ENCODE measurements at regions of chr16 and their contacts with region 1.

Region 1: DNA sequence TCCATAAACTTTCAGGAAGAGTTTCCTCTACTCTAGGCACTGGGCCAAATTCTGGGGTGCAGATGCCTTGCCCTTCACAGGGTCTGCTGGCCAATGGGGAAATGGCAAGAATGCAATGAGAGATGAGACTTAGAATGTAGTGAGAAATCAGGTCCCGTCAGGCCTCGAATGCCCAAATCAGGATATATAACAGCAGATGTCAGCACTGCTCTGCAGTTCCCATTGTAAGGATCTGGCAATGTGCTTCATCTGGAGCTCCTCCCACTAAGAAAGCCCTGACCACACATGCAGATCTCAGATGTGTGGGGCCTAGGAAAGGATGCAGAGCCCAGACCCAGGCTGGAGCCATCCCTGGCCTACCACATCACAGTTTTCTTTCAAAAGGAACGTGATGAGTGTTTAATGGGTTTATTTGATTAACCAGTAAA is 13.9 kb upstream of the LPCAT2 start:
- DNase-seq: peak; percentile 85
- H3K4me3 ChIP-seq: no peak overlapping the region
- H3K27ac ChIP-seq: peak overlapping the region; percentile 2
- H3K4me1 ChIP-seq: peaks cover 52% of the 10 kb centered on the region
- H3K27me3 ChIP-seq: no peaks in the 10 kb centered on the region
- CTCF ChIP-seq: peak; percentile 20 to 33
- POLR2A ChIP-seq: no peak

Region 2: GRCh38 chr16:55136356-55137150 is 358.5 kb before region 1 on chr16:
- CTCF ChIA-PET with region 1: no interaction called
- POLR2A ChIA-PET with region 1: no interaction called
- dilution Hi-C with region 1: no loop called
- intact Hi-C with region 1: no loop called
- DNase-seq: no peak
- H3K4me3 ChIP-seq: no peak overlapping the region
- H3K27ac ChIP-seq: no peak overlapping the region
- H3K4me1 ChIP-seq: no peaks in the 10 kb centered on the region
- H3K27me3 ChIP-seq: no peaks in the 10 kb centered on the region
- CTCF ChIP-seq: no peak
- POLR2A ChIP-seq: no peak

Region 3: GRCh38 chr16:55393991-55394390 is 101.0 kb before region 1 on chr16:
- CTCF ChIA-PET with region 1: no interaction called
- POLR2A ChIA-PET with region 1: no interaction called
- dilution Hi-C with region 1: no loop called
- intact Hi-C with region 1: no loop called
- DNase-seq: no peak
- H3K4me3 ChIP-seq: no peak overlapping the region
- H3K27ac ChIP-seq: no peak overlapping the region
- H3K4me1 ChIP-seq: no peaks in the 10 kb centered on the region
- H3K27me3 ChIP-seq: no peaks in the 10 kb centered on the region
- CTCF ChIP-seq: no peak
- POLR2A ChIP-seq: no peak

Region 4: DNA sequence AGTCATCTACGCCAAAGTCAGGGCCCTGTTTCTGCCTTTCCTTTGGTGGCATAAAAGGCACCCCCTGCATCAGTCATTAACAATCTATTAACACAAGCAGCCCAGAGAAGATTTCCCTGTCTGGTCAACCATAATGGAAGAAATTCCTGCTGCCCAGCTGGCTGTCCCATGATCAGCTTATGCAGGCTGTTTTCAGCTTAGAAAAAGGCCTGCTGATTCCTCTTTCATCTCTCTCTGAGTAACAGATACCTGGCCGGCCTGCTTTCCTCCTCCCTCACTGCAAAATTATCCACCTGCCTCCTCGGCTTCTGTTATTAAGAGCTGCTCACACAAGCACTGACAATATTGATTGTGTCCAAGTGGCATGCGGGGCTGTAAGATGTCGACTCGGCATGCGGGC is 86.3 kb before region 1 on chr16:
- CTCF ChIA-PET with region 1: no interaction called
- POLR2A ChIA-PET with region 1: no interaction called
- dilution Hi-C with region 1: no loop called
- intact Hi-C with region 1: no loop called
- DNase-seq: no peak
- H3K4me3 ChIP-seq: no peak overlapping the region
- H3K27ac ChIP-seq: no peak overlapping the region
- H3K4me1 ChIP-seq: no peaks in the 10 kb centered on the region
- H3K27me3 ChIP-seq: no peaks in the 10 kb centered on the region
- CTCF ChIP-seq: no peak
- POLR2A ChIP-seq: no peak

Region 5: DNA sequence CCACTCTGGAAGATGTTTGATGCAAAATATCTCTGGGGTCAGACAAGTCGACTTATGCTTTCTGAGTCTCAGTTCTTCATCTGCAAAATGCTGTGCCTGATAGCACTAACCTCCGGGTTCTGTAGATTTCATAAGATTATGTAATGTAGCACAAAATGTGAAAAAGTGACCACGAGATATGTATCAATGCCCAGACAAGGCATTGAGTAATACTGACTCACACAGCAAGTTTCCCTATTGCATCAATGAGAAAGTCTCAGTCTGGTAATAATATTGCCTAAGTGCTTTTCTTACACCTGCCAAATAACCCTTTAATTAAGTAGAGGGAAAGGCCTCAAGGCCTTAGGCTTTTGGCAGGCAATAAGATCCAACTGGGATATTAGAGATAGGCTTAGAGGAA is 57.4 kb before region 1 on chr16:
- CTCF ChIA-PET with region 1: no interaction called
- POLR2A ChIA-PET with region 1: no interaction called
- dilution Hi-C with region 1: no loop called
- intact Hi-C with region 1: no loop called
- DNase-seq: no peak
- H3K4me3 ChIP-seq: no peak overlapping the region
- H3K27ac ChIP-seq: no peak overlapping the region
- H3K4me1 ChIP-seq: no peaks in the 10 kb centered on the region
- H3K27me3 ChIP-seq: no peaks in the 10 kb centered on the region
- CTCF ChIP-seq: no peak
- POLR2A ChIP-seq: no peak

Region 6: DNA sequence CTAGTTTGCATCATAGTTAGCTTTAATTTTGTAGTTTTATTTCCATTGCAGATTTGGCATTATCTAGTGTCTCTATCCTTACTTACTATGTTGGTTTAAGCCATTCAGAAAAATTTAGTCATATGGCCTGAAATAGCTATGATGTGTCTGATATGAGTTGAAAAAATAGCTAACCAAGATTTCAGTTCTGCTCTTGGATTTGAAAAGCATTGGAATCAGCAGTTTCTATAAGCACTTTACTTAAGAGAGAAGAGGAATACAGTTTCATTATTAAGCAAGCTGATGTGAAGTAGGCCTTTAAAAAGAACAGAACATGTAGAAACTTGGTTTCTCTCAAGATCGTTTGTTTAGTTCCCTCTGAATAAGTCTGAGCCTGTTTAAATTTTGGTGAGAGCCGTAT is 39.7 kb after region 1 on chr16:
- CTCF ChIA-PET with region 1: interaction called, 10 read pairs
- POLR2A ChIA-PET with region 1: interaction called, 5 read pairs
- dilution Hi-C with region 1: no loop called
- intact Hi-C with region 1: no loop called
- DNase-seq: no peak
- H3K4me3 ChIP-seq: no peak overlapping the region
- H3K27ac ChIP-seq: no peak overlapping the region
- H3K4me1 ChIP-seq: no peaks in the 10 kb centered on the region
- H3K27me3 ChIP-seq: no peaks in the 10 kb centered on the region
- CTCF ChIP-seq: no peak
- POLR2A ChIP-seq: no peak

Region 7: DNA sequence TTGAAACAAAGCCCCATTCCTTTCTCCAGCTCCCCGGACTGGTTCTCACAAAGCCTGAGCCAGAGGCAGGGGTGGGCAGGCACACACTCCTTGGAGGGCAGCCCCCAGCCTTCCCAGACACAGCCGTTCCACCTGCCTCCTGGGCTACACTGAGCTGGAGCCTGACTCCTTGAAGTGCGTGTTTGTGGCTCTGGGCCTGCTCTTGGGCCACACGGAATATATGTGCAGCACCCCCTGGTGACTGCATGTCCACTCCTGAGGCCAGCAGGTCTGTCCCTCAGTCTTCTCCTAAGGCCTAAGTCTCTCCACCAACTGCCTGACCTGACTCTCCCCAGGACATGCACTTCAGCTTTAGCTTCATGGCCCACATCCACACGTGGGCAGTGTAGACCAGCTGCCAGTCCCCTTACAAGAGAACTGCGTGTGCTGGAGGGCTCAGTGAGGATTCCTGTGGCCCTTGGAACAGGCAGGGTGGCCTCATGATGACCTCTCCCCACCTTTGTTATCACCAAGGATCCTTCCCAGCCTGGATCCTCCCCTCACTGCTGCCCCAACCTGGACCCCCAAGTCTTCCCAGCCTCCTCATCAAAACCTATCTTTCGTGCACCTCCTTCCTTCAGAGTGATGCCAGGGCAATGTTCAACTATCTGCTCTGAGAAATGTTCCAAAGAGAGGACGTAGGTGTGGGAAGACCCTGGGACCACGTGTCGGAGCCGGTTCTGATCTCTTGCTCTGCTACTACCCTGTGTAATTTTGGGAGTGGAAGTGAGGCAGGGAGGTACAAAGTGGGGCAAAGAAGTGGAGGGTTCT is 148.4 kb after region 1 on chr16:
- CTCF ChIA-PET with region 1: interaction called, 13 read pairs
- POLR2A ChIA-PET with region 1: no interaction called
- dilution Hi-C with region 1: no loop called
- intact Hi-C with region 1: loop called (anchors 1 kb)
- DNase-seq: peak; percentile 33
- H3K4me3 ChIP-seq: no peak overlapping the region
- H3K27ac ChIP-seq: no peak overlapping the region
- H3K4me1 ChIP-seq: no peaks in the 10 kb centered on the region
- H3K27me3 ChIP-seq: peaks cover 5 to 9% of the 10 kb centered on the region in 2 experiments
- CTCF ChIP-seq: peak; percentile 11 to 58
- POLR2A ChIP-seq: no peak